PC-9 (cell line): ENCODE measurements at regions of chr16 and their contacts with region 1.

Region 1: DNA sequence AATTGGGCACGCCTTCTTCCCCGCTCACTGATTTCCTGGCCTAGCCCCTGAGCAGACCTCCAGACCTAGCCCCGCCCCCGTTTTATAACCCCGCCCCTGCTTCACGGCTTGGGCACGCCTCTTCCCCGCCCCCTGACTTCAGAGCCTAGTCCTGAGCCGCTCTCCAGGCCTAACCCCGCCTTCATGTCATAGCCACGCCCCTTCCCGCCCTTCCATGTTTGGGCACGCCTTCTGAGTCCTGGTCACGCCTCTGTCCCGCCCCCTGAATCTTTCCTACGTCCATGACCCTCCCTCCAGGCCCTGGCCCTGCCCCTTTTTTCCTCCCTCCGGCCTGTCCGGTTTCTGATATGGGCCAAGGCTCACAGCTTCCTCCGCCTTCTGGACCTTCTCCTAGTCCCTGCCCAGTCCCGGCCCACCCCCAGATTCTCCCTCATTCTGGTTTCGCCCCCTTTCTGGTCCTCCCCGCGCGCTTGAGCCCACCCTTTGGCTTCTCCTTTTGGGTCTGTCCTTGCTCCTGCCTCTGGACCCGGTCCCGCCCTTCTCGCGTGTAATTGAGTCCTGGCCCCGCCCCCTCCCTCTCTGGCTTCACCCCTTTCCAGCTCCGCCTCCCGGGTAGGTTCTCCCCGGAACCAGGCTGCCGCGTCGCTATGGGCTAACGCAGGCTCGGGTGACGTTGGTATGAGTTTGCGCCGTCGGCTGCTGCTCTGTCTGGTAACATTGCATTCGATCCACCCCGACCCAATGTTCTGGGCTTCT is 15.1 kb upstream of the EEF2K start:
- DNase-seq: peak; percentile 94 to 100
- H3K4me3 ChIP-seq: peak overlapping the region; percentile 77
- H3K27ac ChIP-seq: peak overlapping the region; percentile 59
- H3K4me1 ChIP-seq: peaks cover 19% of the 10 kb centered on the region
- H3K27me3 ChIP-seq: no peaks in the 10 kb centered on the region
- CTCF ChIP-seq: no peak

Region 2: GRCh38 chr16:21184834-21185233 is 1006.1 kb before region 1 on chr16:
- CTCF ChIA-PET with region 1: no interaction called
- POLR2A ChIA-PET with region 1: no interaction called
- intact Hi-C with region 1: loop called (anchors 10 kb)
- DNase-seq: no peak
- H3K4me3 ChIP-seq: no peak overlapping the region
- H3K27ac ChIP-seq: no peak overlapping the region
- H3K4me1 ChIP-seq: peaks cover 11% of the 10 kb centered on the region; the same call in 1 of the 2 replicates
- H3K27me3 ChIP-seq: no peaks in the 10 kb centered on the region
- CTCF ChIP-seq: no peak

Region 3: GRCh38 chr16:21952793-21953540 is 238.0 kb before region 1 on chr16 and contains the start of gene UQCRC2:
- CTCF ChIA-PET with region 1: interaction called, 6 read pairs
- POLR2A ChIA-PET with region 1: no interaction called
- intact Hi-C with region 1: loop called (anchors 1 kb)
- DNase-seq: peak; percentile 91 to 92
- H3K4me3 ChIP-seq: peak within 1 kb of the TSS; percentile 90
- H3K27ac ChIP-seq: peak within 1 kb of the TSS; percentile 94
- H3K4me1 ChIP-seq: peaks cover 14% of the 10 kb centered on the region
- H3K27me3 ChIP-seq: no peaks in the 10 kb centered on the region
- CTCF ChIP-seq: no peak
- total RNA-seq, gene UQCRC2: 195 and 299 TPM in 2 replicates

Region 4: DNA sequence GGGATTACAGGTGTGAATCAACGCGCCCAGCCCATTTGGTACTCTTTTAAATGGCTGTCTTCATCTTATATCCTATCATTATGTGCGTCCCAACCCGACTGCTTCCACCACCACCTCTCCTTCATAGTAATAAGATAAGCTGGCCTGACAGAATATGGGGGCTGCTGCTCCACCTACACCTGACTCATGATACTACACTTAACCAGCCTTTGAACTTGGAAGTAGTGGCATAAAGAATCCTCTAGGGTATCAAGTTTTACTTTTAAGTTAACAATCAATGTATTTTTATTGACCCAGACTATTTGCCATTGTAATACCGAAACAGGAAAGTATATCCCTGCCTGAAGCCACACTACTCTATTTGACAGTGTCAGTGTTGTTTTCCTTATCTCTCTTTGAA is 208.8 kb before region 1 on chr16:
- CTCF ChIA-PET with region 1: no interaction called
- POLR2A ChIA-PET with region 1: no interaction called
- intact Hi-C with region 1: no loop called
- DNase-seq: no peak
- H3K4me3 ChIP-seq: no peak overlapping the region
- H3K27ac ChIP-seq: no peak overlapping the region
- H3K4me1 ChIP-seq: no peaks in the 10 kb centered on the region
- H3K27me3 ChIP-seq: no peaks in the 10 kb centered on the region
- CTCF ChIP-seq: no peak

Region 5: DNA sequence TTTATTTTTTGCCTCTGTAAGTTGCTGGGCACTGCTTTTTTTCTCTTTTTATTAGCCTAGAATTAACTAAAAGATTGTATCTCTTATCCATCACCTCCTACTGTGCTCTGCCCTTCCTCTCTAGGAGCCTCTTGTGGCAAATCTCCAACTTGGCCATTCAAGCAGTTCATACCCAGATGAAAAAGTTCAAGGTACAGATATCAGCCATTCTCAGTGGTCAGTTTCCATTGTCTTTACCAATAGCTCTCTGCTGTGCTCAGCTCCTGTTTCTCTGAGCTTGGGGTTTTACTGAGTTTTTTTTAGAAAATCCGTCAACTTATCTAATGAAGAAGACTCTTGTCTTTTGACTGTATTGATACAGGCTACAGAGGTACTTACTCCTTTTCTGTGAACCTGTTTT is 167.4 kb before region 1 on chr16:
- CTCF ChIA-PET with region 1: no interaction called
- POLR2A ChIA-PET with region 1: no interaction called
- intact Hi-C with region 1: no loop called
- DNase-seq: no peak
- H3K4me3 ChIP-seq: no peak overlapping the region
- H3K27ac ChIP-seq: 0 out of 2 replicates have a peak overlapping the region, but pooled peaks have one; percentile 20
- H3K4me1 ChIP-seq: peaks cover 52% of the 10 kb centered on the region
- H3K27me3 ChIP-seq: no peaks in the 10 kb centered on the region
- CTCF ChIP-seq: no peak

Region 6: GRCh38 chr16:22091758-22092600 is 99.0 kb before region 1 on chr16 and contains the start of gene VWA3A:
- CTCF ChIA-PET with region 1: no interaction called
- POLR2A ChIA-PET with region 1: no interaction called
- intact Hi-C with region 1: loop called (anchors 5 kb)
- DNase-seq: peak; percentile 39 to 76
- H3K4me3 ChIP-seq: no peak within 1 kb of the TSS
- H3K27ac ChIP-seq: no peak within 1 kb of the TSS
- H3K4me1 ChIP-seq: no peaks in the 10 kb centered on the region; the same call in 1 of the 2 replicates
- H3K27me3 ChIP-seq: no peaks in the 10 kb centered on the region
- CTCF ChIP-seq: no peak
- total RNA-seq, gene VWA3A: 0.73 and 0.83 TPM in 2 replicates

Region 7: DNA sequence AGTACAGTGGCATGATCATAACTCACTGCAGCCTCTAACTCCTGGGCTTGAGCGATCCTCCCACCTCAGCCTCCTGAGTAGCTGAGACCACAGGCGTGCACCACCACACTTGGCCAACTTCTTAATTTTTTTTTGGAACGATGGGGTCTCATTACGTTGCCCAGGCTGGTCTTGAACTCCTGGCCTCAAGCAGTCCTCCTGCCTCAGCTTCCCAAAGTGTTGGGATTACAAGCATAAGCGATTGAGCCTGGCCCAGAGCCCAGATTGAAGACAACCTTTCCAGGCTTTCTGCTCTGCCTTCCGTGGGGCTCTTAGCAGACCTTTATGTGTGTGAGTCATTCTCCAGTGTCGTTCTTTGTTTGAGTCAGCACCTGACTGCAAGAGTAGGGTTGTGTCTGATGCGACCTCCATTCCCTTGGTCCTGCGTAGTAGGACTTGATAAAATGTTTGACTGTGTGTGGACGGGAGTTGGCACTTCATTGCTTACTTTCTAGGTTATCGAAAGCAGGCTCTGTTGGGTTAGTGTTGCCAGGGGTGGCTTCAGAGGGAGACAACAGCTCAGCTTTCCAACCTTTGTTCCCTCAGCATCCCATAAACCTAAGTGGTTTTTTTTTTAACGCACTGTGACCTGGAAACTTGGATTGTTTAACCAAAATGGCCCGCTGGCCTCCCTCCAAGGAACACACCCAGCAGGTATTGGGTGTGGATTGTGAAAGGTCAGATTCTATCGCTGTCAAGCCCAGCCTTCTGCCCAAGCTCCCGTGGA is 41.5 kb after region 1 on chr16:
- CTCF ChIA-PET with region 1: no interaction called
- POLR2A ChIA-PET with region 1: no interaction called
- intact Hi-C with region 1: loop called (anchors 2 kb)
- DNase-seq: peak; percentile 92 to 94
- H3K4me3 ChIP-seq: peak overlapping the region; percentile 7; the same call in 1 of the 2 replicates
- H3K27ac ChIP-seq: peak overlapping the region; percentile 79
- H3K4me1 ChIP-seq: peaks cover 34% of the 10 kb centered on the region
- H3K27me3 ChIP-seq: no peaks in the 10 kb centered on the region
- CTCF ChIP-seq: no peak

Region 8: DNA sequence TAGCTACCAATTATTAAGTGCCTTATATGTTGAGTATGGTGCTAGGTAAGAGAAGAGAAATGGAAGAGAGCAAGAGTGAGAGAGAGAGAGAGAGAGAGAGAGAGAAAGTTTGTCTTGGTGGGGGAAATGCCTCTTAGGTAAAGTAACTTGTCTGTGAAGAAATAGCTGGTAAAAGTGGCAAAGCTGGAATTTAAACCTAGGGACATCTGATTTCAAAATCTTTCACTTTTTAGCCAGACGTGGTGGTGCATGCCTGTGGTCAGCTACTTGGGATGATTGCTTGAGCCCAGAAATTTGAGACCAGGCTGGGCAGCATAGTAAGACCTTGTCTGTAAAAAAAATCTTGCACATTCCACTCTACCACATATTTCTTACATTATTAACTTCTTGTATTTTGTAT is 206.5 kb after region 1 on chr16:
- CTCF ChIA-PET with region 1: no interaction called
- POLR2A ChIA-PET with region 1: interaction called, 18 read pairs
- intact Hi-C with region 1: no loop called
- DNase-seq: peak; percentile 84 to 96
- H3K4me3 ChIP-seq: no peak overlapping the region
- H3K27ac ChIP-seq: peak overlapping the region; percentile 55
- H3K4me1 ChIP-seq: peaks cover 51% of the 10 kb centered on the region
- H3K27me3 ChIP-seq: no peaks in the 10 kb centered on the region
- CTCF ChIP-seq: no peak; the same call in 1 of the 2 replicates